ENCODE measurements at regions of chr2 and their contacts with region 1.

Region 1: DNA sequence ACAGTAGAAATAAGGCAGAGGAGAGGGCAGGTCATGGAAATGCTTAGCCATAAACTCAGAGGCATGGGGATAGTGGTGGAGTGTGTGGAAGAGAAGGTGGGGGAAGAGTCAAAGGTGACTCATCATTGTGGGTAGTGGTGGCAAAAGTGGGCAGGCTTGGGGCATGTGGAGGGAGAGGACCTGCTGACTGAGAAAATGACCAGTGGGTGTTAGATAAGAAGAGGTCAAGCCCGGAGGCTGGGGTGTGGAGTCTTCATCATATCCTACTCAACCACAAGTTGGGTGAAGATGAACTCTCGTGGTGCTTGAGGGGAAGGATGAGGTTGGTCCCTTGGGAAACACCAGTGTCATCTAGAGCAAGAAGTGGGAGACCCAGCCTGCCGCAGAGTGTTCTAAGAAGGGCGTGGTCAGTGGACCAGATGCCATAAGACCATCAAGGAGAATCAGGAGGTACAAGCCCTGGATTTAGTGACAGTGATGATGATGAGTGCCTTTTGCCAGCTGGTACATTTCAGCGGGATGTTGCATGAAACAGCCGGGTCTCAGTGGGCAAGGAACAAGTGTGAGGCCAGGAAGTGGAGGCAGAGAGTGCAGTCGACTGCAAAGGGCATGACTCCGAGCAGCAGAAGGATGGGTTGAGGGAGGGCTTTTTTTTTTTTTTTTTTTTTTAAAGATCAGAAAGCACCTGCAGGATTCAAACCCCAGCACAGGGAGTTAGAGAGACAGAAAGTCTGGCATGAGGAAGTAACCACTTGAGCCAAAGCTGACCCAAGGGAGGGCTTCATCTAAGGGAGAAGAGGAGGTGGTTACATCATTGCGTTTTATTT is 122.6 kb upstream of the SPRED2 start:
- DNase-seq: peak; percentile 41
- ATAC-seq: peak; percentile 65
- H3K4me3 Mint-ChIP-seq: no peak overlapping the region
- H3K27ac Mint-ChIP-seq: peak overlapping the region; percentile 12
- H3K4me1 Mint-ChIP-seq: peaks cover 15% of the 10 kb centered on the region
- H3K27me3 Mint-ChIP-seq: peaks cover 8% of the 10 kb centered on the region

Region 2: GRCh38 chr2:65264821-65265670 is 289.9 kb before region 1 on chr2:
- CTCF ChIA-PET with region 1: interaction called, 3 read pairs
- POLR2A ChIA-PET with region 1: no interaction called
- intact Hi-C with region 1: loop called (anchors 1 kb)
- DNase-seq: no peak
- ATAC-seq: peak; percentile 36
- H3K4me3 Mint-ChIP-seq: no peak overlapping the region
- H3K27ac Mint-ChIP-seq: no peak overlapping the region
- H3K4me1 Mint-ChIP-seq: peaks cover 11% of the 10 kb centered on the region
- H3K27me3 Mint-ChIP-seq: no peaks in the 10 kb centered on the region

Region 3: DNA sequence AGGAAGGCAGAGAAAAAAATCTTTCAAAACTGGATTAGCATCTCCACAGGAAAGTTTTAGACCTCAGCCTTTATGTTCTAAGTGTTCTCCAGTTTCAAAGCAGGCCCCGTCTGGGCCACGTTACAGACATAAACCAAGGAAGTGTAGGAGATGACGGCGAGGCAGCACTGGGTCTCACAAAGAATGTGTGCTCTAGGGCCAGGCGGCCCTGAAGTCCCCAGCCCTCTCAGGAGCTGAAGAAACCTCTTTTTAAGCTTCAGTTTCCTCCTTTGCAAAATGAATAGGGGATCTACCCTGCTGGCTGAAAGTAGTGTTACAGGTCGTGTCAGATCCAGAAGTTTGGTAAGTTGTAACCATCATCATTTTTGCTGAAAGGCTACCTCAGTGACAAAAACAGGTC is 204.3 kb before region 1 on chr2:
- CTCF ChIA-PET with region 1: no interaction called
- POLR2A ChIA-PET with region 1: no interaction called
- intact Hi-C with region 1: loop called in 1 of 2 experiments (anchors 10 kb)
- DNase-seq: peak; percentile 18
- ATAC-seq: peak; percentile 58
- H3K4me3 Mint-ChIP-seq: no peak overlapping the region
- H3K27ac Mint-ChIP-seq: no peak overlapping the region
- H3K4me1 Mint-ChIP-seq: peaks cover 7% of the 10 kb centered on the region
- H3K27me3 Mint-ChIP-seq: peaks cover 2% of the 10 kb centered on the region

Region 4: GRCh38 chr2:65366595-65367125 is 188.3 kb before region 1 on chr2:
- CTCF ChIA-PET with region 1: no interaction called
- POLR2A ChIA-PET with region 1: no interaction called
- intact Hi-C with region 1: loop called in 1 of 2 experiments (anchors 5 kb)
- DNase-seq: peak; percentile 63
- ATAC-seq: peak; percentile 97
- H3K4me3 Mint-ChIP-seq: no peak overlapping the region
- H3K27ac Mint-ChIP-seq: no peak overlapping the region
- H3K4me1 Mint-ChIP-seq: peaks cover 17% of the 10 kb centered on the region
- H3K27me3 Mint-ChIP-seq: peaks cover 2% of the 10 kb centered on the region

Region 5: GRCh38 chr2:65382776-65383357 is 172.1 kb before region 1 on chr2:
- CTCF ChIA-PET with region 1: no interaction called
- POLR2A ChIA-PET with region 1: no interaction called
- intact Hi-C with region 1: loop called (anchors 1 to 2 kb)
- DNase-seq: peak; percentile 95
- ATAC-seq: peak; percentile 90
- H3K4me3 Mint-ChIP-seq: peak overlapping the region; percentile 26
- H3K27ac Mint-ChIP-seq: peak overlapping the region; percentile 33
- H3K4me1 Mint-ChIP-seq: peaks cover 32% of the 10 kb centered on the region
- H3K27me3 Mint-ChIP-seq: peaks cover 13% of the 10 kb centered on the region

Region 6: DNA sequence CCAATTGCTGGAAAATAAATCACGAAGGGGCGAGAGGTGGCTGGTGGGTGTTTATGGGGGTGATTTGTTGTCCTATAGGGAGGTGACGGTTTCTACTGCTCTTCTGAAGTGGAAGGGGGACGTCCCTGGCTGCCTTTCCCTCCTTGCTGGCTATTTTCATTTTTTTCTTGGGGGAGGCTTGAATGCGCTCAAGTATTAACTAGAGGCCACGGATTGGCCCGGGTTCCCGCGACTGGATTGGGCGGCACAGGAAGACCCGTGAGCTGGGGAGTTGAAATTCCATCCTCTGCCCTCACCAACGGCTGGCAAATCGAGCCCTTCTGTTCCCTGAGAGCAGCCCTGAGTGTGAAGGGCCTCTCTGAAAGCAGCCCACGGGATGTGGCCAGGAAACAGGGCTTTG is 53.9 kb after region 1 on chr2:
- CTCF ChIA-PET with region 1: no interaction called
- POLR2A ChIA-PET with region 1: no interaction called
- intact Hi-C with region 1: no loop called
- DNase-seq: no peak
- ATAC-seq: no peak
- H3K4me3 Mint-ChIP-seq: no peak overlapping the region
- H3K27ac Mint-ChIP-seq: no peak overlapping the region
- H3K4me1 Mint-ChIP-seq: peaks cover 19% of the 10 kb centered on the region
- H3K27me3 Mint-ChIP-seq: no peaks in the 10 kb centered on the region

Region 7: DNA sequence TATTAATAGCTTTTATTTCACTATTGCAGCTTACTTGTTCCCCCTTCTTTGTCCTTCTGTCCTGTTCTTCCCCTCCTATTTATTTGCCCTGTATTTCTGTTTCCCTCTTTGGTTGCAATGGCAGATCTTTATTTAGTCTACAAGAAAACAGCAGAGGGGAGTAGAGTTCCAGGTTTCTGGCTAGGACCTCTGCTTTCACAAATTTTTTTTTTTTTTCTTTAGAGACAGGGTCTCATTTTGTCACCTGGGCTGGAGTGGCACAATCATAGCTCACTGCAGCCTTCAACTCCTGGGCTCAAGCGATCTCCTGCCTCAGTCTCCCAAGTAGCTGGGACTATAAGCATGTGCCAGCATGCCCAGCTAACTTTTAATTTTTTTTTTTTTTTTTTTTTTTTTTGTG is 65.5 kb after region 1 on chr2:
- CTCF ChIA-PET with region 1: no interaction called
- POLR2A ChIA-PET with region 1: no interaction called
- intact Hi-C with region 1: no loop called
- DNase-seq: no peak
- ATAC-seq: no peak
- H3K4me3 Mint-ChIP-seq: no peak overlapping the region
- H3K27ac Mint-ChIP-seq: no peak overlapping the region
- H3K4me1 Mint-ChIP-seq: peaks cover 3% of the 10 kb centered on the region
- H3K27me3 Mint-ChIP-seq: peaks cover 17% of the 10 kb centered on the region

Measured in activated CD4-positive, alpha-beta T cell treated with anti-CD3 and anti-CD28 coated beads for 36 hours (primary cell).